Colonic mucosa (tissue), 4 donors: ENCODE measurements at regions of chr6 and their contacts with region 1.

Region 1: DNA sequence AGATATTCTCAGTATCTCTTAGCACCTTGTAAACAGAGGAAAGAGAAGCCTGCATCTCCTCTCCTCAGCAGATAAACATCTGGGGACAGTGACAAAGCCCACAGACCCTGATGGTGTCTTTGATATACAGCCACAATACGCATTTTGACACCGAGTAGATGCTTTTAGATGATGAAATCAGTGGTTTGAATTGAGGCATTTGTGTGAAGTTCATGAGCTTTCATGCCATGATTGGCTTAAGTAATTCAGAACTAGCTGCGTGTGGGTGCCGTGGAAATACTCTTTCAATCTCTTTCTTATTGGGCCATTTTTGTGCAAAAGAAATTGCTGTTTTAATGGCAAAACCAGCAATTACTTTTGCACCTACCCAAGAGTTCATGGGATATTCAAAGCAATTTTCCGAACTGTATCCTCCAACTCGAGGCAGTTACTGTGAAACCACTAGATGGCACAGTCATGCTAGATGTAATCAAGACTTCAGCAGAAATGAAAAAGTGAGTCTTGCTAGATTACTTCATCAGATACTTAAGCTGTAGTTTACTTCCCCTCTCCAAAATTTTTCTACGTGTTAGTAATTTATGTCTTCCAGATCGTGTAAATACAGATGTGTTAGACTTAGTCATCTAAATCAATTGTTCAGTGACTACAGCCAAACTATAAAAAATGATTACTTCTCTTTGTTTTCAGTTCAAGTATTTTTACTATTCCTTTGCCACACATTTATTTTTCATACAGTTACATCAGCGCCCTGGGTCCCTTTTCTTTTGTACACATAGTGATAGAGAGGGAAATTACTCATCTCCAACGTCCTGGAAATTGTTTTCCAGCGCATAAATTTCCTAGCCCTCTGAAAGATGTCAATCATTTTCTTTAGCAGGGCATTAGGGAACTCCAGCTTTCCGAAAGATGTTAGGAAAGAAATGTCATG is 49.4 kb downstream of the IYD start:
- DNase-seq: peak; percentile 50
- H3K4me3 ChIP-seq: peak overlapping the region; percentile 4
- H3K27ac ChIP-seq: peak overlapping the region; percentile 38
- H3K4me1 ChIP-seq: no peaks in the 10 kb centered on the region
- H3K27me3 ChIP-seq: no peaks in the 10 kb centered on the region
- CTCF ChIP-seq: peak; percentile 62

Region 2: DNA sequence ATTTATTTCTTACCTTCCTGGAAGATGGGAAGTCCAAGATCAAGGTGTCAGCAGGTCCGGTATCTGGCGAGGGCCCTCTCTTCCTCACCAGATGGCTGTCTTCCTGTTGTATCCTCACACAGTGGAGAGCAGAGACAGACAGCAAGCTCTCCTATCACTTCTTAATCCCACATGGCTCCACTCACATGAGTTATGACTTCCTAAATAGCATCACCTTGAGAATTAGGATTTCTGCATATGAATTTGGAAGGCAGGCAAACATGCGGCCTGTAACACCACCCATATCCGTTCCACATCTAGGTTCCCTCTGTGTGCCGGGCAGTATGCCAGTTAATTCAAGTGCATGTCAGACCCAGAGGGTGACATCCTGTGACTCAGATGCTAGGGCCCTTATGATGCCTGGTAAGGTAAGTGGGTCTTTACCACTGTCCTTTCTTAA is 522.3 kb before region 1 on chr6:
- intact Hi-C with region 1: no loop called
- DNase-seq: peak; percentile 40
- H3K4me3 ChIP-seq: no peak overlapping the region
- H3K27ac ChIP-seq: peak overlapping the region; percentile 63
- H3K4me1 ChIP-seq: peaks cover 13% of the 10 kb centered on the region
- H3K27me3 ChIP-seq: no peaks in the 10 kb centered on the region
- CTCF ChIP-seq: no peak

Region 3: DNA sequence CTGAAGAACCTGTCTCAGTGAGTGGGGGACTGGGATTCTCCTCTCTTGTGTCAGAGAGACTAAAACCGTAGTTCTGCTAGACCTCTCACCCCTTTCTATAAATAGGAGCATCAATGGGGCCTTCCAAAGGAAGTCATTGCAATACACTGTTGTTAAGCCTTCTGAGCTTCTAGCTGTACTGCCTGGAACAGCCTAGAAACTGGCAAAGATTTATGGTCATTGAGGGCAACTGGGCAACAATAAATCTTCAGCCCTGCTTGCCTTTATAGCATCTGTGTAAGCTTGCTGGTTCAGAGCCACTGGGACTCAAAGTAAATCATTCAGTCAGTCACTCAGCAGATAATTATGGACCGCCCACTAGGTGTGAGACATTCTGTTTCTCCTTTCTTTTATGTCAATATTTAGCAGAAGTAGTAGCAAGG is 222.2 kb before region 1 on chr6:
- intact Hi-C with region 1: no loop called
- DNase-seq: peak; percentile 69
- H3K4me3 ChIP-seq: no peak overlapping the region
- H3K27ac ChIP-seq: peak overlapping the region; percentile 56
- H3K4me1 ChIP-seq: no peaks in the 10 kb centered on the region
- H3K27me3 ChIP-seq: no peaks in the 10 kb centered on the region
- CTCF ChIP-seq: no peak

Region 4: GRCh38 chr6:150600301-150601017 is 182.3 kb after region 1 on chr6:
- intact Hi-C with region 1: loop called (anchors 5 kb)
- DNase-seq: peak; percentile 82
- H3K4me3 ChIP-seq: peak overlapping the region; percentile 78
- H3K27ac ChIP-seq: peak overlapping the region; percentile 91
- H3K4me1 ChIP-seq: peaks cover 4% of the 10 kb centered on the region
- H3K27me3 ChIP-seq: no peaks in the 10 kb centered on the region
- CTCF ChIP-seq: peak; percentile 43

Region 5: DNA sequence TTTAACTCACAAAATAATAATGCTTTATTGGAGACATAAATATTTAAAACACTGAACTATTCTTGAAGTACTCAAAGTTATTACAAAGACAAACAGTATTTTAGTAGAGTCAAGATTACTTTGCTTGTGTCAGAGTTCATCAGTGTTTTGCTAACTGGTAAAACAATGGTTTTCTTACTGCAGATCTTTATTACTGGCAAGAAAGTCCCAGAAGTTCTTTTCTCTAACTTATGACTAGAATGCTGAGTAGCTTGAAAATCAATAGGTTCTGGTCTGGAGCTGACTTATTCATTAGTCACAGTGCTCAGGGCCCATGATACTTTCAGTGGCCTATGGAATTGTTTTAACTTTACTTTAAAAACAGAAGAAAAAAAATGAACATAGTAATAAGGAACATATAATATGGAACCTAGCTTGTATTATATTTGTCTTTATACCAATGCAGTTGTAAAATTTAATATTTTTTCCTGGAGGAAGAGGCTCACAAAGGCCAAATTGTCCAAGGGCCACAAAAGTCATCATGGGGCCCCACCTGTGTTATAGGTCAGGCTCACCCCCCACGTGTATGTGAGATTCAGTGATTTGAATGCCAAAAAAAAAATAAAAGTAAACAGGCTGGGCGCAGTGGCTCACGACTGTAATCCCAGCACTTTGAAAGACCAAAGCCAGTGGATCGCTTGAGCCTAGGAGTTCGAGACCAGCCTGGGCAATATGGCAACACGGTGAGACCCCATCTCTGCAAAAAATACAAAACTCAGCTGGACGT is 234.9 kb after region 1 on chr6:
- intact Hi-C with region 1: no loop called
- DNase-seq: peak; percentile 75
- H3K4me3 ChIP-seq: no peak overlapping the region
- H3K27ac ChIP-seq: peak overlapping the region; percentile 67
- H3K4me1 ChIP-seq: no peaks in the 10 kb centered on the region
- H3K27me3 ChIP-seq: no peaks in the 10 kb centered on the region
- CTCF ChIP-seq: no peak

Region 6: DNA sequence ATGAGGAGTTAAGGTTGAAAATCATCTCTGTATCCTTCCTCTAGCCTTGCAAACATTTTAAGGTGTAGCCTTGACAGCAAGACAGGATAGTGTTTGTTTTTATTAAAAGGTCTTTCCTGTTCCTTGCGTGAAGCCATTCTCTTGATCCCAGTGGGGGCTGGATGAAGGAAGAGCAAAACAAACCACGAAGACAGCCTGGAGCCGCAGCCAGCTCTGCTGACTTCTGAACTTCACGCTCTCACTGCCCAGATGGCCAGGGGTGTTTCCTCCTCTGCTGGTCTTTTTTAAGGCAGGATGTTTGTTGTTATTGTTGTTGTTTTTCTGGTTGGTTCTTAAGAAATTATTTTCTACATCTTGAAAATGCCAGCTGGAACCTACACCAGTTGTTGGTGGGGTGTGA is 603.7 kb after region 1 on chr6:
- intact Hi-C with region 1: no loop called
- DNase-seq: no peak
- H3K4me3 ChIP-seq: no peak overlapping the region
- H3K27ac ChIP-seq: no peak overlapping the region
- H3K4me1 ChIP-seq: no peaks in the 10 kb centered on the region
- H3K27me3 ChIP-seq: no peaks in the 10 kb centered on the region
- CTCF ChIP-seq: no peak